ENCODE measurements at regions of chr1 and their contacts with region 1.

Region 1: DNA sequence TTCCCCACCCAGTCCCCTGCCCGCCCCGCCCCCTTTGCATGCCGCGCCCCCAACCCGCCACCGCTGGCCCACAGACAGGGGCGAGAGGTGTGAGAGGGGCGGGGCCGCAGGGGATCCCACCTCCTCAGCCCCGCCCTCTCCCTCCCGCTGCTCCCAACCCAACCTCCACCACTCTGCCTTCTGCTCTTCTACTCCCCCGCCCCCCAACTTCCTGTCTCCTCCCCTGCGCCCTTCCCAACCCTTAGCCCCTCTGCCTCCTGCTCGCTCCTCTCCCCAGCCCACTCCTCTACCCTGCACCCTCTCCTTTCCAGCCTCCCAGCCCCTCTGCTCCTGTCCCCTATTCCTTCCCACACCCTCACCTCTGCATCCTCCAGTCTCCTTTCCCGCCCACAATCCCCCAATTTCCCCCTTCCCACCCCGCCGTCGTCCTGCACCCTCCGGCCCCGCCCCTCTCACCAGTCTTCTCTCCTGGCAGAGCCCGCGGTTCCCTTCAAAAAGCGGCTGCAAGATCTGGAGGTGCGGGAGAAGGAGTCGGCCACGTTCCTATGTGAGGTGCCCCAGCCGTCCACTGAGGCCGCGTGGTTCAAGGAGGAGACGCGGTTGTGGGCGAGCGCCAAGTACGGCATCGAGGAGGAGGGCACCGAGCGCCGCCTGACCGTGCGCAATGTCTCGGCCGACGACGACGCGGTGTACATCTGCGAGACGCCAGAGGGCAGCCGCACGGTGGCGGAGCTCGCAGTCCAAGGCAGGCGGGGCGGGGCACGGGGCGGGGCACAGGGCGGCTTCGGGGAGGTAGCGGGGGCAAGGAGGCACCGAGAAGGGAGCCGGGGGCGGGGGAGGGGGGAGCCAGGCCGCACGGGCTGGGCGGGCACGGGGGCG is 5.4 kb downstream of the OBSCN start:
- DNase-seq: peak; percentile 90
- H3K4me3 Mint-ChIP-seq: peak overlapping the region; percentile 70
- H3K27ac Mint-ChIP-seq: no peak overlapping the region
- H3K4me1 Mint-ChIP-seq: no peaks in the 10 kb centered on the region
- H3K27me3 Mint-ChIP-seq: no peaks in the 10 kb centered on the region
- CTCF ChIP-seq: peak; percentile 16

Region 2: GRCh38 chr1:228236744-228237143 is 23.5 kb after region 1 on chr1:
- CTCF ChIA-PET with region 1: interaction called, 13 read pairs
- intact Hi-C with region 1: no loop called
- DNase-seq: peak; percentile 43
- H3K4me3 Mint-ChIP-seq: no peak overlapping the region
- H3K27ac Mint-ChIP-seq: no peak overlapping the region
- H3K4me1 Mint-ChIP-seq: no peaks in the 10 kb centered on the region
- H3K27me3 Mint-ChIP-seq: no peaks in the 10 kb centered on the region
- CTCF ChIP-seq: peak; percentile 22

Region 3: DNA sequence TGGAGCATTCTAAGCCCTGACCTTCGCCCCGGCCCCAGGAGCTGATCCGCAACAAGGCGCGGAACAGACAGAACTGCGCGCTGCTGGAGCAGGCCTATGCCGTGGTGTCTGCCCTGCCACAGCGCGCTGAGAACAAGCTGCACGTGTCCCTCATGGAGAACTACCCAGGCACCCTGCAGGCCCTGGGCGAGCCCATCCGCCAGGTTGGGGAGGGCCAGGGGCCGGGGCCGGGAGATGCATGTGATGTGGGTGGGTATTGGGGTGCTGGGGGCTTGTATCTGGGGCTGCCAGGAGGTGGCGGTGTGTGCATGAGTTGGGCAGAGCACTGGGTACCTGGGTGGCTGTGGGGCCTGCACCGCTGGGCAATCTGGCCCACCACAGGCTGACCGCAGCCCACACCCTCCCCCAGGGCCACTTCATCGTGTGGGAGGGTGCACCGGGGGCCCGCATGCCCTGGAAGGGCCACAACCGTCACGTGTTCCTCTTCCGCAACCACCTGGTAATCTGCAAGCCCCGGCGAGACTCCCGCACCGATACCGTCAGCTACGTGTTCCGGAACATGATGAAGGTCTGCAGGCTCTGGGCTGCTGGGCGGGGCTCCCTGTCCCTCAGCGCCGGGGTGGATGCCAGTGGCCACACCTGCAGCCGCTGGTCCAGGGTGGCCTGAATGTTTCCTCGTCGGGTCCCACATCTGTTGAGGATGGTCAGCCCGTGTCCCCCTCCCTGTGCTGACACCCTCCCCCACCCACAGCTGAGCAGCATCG is 127.7 kb after region 1 on chr1:
- CTCF ChIA-PET with region 1: no interaction called
- intact Hi-C with region 1: loop called (anchors 10 kb)
- DNase-seq: peak; percentile 73
- H3K4me3 Mint-ChIP-seq: peak overlapping the region; percentile 61
- H3K27ac Mint-ChIP-seq: no peak overlapping the region
- H3K4me1 Mint-ChIP-seq: no peaks in the 10 kb centered on the region
- H3K27me3 Mint-ChIP-seq: no peaks in the 10 kb centered on the region
- CTCF ChIP-seq: peak; percentile 83

Measured in Calu3 (cell line).